HCT116 (cell line): ENCODE measurements at regions of chr3 and their contacts with region 1.

Region 1: DNA sequence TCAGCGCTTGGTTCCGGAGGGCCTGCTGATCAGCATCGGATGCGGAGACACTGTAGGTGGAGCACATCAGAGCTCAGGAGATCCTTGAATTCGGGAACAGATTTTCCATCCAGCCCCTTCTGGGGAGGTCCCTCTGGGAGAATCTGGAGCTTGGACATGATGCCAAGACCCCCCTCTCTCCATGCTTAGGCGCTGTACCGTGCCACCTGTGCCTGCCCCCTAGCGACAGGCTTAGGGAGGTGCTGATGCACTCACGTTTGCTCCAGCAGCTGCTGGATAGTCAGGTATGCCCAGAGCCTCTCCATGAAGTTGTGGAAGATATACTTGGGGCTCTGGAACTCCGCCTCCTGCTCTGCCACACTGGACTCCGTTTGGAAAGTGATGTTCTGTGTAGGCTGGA is 9.7 kb downstream of the ITIH4 start:
- DNase-seq: peak; percentile 12
- ATAC-seq: peak; percentile 94
- H3K4me3 ChIP-seq: no peak overlapping the region
- H3K27ac ChIP-seq: no peak overlapping the region
- H3K4me1 ChIP-seq: peaks cover 0 to 6% of the 10 kb centered on the region in 2 experiments; a peak in 1 of 4 replicates
- H3K27me3 ChIP-seq: no peaks in the 10 kb centered on the region
- CTCF ChIP-seq: peak; percentile 46 to 96 (median 90); a peak in 5 of 6 replicates
- POLR2A ChIP-seq: no peak
- RAD21 ChIP-seq: no peak; the same call in 1 of the 2 replicates

Region 2: DNA sequence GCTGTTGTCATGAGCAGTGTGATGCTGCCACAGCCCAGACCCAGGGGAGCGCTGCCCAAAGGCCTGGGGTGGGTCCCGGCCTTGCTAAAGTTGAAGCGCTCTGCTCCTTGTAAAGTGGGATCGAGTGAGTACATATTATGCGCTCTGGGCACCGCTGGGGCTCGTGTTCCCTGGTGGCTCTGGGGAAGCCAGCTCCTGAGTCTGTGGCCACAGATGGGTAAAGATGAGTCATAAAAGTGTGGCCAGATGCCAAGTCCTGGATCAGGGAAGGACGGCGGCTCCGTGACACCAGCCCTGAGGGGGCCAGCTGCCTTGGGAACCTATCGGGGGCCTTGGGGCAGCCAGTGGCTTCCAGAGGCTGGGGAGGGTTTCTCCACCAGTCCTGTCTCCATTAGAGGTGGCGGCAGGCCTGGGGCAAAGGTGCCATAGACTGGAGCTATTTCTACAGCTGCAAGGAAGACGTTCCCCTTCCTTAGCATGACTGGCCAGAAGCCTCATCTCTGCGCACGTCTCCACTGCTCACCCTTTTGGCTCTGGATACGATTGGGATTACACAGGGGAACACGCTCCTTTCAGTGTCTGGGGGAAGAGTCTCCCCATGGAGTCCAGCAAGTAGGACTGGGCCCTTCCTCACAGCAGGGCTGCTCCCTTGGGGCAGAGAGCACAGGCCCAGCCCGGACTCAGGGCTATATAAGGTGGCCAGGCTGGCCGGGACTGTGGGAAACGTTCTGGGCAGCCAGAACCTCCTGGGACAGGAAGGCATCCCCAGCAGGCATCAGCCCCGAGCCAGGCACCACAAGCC is 11.0 kb after region 1 on chr3:
- CTCF ChIA-PET with region 1: interaction called, 11 read pairs
- POLR2A ChIA-PET with region 1: no interaction called
- RAD21 ChIA-PET with region 1: interaction called in 1 of 2 experiments, 3 read pairs
- intact Hi-C with region 1: no loop called
- DNase-seq: peak; percentile 68
- ATAC-seq: peak; percentile 87
- H3K4me3 ChIP-seq: peak overlapping the region; percentile 4 to 32; a peak in 2 of 4 replicates
- H3K27ac ChIP-seq: peak overlapping the region; percentile 21; the same call in 1 of the 2 replicates
- H3K4me1 ChIP-seq: peaks cover 20 to 22% of the 10 kb centered on the region in 2 experiments
- H3K27me3 ChIP-seq: no peaks in the 10 kb centered on the region
- CTCF ChIP-seq: no peak
- POLR2A ChIP-seq: no peak
- RAD21 ChIP-seq: no peak